Colonic mucosa (tissue), 4 donors: ENCODE measurements at regions of chr11 and their contacts with region 1.

Region 1: DNA sequence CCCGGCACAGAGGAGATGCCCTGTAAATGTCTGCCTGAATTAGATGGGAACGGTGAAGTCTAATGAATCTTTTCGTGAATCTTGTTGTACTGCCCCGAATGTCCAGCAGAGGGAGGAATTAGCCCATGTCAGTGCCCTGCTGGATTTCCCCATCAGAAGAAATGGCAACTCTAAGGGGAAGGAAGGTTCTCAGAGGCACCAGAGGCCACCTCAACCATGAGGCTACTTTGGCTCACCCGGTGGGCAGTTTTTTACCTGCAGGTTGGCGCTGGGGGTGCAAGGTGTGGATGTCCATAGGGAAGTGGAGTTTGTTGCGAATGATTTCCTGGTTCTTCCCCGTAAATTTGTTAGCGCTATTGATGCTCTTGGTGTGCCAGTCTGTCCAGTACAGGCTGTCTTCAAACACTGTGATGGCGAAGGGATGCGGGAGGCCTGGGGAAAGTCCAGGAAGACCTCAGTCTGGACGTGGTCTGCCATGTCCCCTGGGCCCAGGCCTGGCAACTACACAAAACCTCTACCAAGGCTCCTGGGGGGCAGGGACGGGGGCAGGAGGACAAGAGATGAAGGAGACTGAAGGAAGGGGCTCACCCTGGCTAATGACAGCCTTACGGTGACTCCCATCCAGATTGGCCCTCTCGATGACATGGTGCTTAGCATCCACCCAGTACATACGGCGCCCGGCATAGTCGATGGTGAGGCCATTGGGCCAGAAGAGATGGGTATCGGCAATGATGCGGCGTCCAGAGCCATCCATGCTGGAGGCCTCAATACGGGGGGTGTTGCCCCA is 28.5 kb downstream of the LRP4 start:
- DNase-seq: peak; percentile 83
- H3K4me3 ChIP-seq: no peak overlapping the region
- H3K27ac ChIP-seq: no peak overlapping the region
- H3K4me1 ChIP-seq: no peaks in the 10 kb centered on the region
- H3K27me3 ChIP-seq: no peaks in the 10 kb centered on the region
- CTCF ChIP-seq: peak; percentile 58

Region 2: DNA sequence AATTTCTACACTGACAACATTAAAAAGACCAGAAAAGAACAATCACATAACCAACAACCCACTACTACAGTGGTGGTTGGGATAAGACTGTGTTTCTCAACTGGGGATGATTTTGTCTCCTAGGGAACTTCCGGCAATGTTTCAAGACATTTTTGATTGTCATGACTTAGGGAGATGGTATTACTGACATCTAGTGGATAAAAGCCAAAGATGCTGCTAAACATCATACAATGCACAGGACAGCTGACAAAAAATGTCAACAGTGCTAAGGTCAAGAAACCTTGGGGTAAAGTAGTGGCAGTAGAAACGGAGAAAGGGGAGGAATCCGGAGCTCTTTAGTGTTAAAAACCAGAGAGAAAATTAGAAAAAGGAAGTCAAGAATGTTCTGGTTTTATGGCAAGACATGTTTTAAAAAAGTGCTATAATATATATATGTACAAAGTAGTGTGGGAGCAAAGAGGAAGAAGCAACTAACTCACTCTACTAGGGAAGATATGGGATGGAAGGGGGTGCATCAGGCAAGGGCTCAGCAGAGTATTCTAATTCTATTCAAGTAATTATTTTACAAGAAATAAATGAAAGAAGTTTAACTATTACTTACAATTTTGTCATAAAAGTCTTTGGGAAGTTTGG is 81.0 kb before region 1 on chr11:
- intact Hi-C with region 1: no loop called
- DNase-seq: no peak
- H3K4me3 ChIP-seq: no peak overlapping the region
- H3K27ac ChIP-seq: no peak overlapping the region
- H3K4me1 ChIP-seq: no peaks in the 10 kb centered on the region
- H3K27me3 ChIP-seq: no peaks in the 10 kb centered on the region
- CTCF ChIP-seq: peak; percentile 26

Region 3: GRCh38 chr11:47161134-47161854 is 271.4 kb after region 1 on chr11:
- intact Hi-C with region 1: loop called (anchors 2 kb)
- DNase-seq: peak; percentile 65
- H3K4me3 ChIP-seq: no peak overlapping the region
- H3K27ac ChIP-seq: no peak overlapping the region
- H3K4me1 ChIP-seq: no peaks in the 10 kb centered on the region
- H3K27me3 ChIP-seq: no peaks in the 10 kb centered on the region
- CTCF ChIP-seq: peak; percentile 66

Region 4: DNA sequence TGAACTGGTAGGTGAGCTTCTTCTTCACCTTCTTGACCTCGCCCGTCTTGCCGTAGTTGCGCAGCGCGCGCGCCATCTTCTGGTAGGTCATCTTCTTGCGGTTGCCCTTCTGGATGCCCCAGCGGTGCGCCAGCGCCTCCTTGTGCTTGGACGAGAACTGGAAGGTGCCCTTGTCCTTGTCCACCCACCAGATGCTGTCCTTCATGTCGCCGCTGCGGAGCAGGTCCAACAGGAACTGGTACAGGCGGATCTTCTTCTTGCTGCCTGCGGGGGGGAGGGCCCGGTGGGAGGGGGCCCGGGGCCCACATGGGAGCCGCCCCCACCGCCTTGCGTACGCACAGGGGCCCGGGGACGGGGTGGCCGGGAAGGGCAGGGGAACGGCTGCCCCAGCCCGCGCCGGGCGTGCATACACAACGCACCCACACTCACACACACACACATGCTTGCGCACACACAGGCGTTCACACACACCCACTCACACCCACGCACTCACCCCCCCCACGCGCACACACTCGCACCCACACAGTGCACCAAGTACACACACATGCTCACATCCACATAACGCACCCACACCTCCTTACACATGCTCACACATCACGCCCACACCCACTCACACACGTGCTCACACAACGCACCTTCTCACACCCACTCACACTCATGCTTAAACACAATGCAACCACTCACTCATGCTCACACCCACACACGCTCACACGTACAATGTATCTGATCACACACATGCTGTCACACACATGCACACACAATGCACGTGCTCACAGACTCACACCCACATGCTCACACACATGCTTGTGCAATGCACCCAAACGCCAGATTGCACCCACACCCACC is 465.6 kb after region 1 on chr11:
- intact Hi-C with region 1: loop called (anchors 10 kb)
- DNase-seq: peak; percentile 99
- H3K4me3 ChIP-seq: peak overlapping the region; percentile 41
- H3K27ac ChIP-seq: no peak overlapping the region
- H3K4me1 ChIP-seq: no peaks in the 10 kb centered on the region
- H3K27me3 ChIP-seq: no peaks in the 10 kb centered on the region
- CTCF ChIP-seq: peak; percentile 89